GM12878 (cell line): ENCODE measurements at regions of chr15 and their contacts with region 1.

Region 1: GRCh38 chr15:42608110-42608531 is 32.7 kb downstream of the STARD9 start:
- DNase-seq: peak; percentile 71
- ATAC-seq: peak; percentile 82
- H3K4me3 ChIP-seq: no peak overlapping the region
- H3K27ac ChIP-seq: peak overlapping the region; percentile 50
- H3K4me1 ChIP-seq: peaks cover 45% of the 10 kb centered on the region
- H3K27me3 ChIP-seq: no peaks in the 10 kb centered on the region
- CTCF ChIP-seq: no peak
- EP300 ChIP-seq: peak in 1 of 2 experiments; percentile 52; a peak in 1 of 4 replicates
- POLR2A ChIP-seq: no peak
- RAD21 ChIP-seq: no peak

Region 2: DNA sequence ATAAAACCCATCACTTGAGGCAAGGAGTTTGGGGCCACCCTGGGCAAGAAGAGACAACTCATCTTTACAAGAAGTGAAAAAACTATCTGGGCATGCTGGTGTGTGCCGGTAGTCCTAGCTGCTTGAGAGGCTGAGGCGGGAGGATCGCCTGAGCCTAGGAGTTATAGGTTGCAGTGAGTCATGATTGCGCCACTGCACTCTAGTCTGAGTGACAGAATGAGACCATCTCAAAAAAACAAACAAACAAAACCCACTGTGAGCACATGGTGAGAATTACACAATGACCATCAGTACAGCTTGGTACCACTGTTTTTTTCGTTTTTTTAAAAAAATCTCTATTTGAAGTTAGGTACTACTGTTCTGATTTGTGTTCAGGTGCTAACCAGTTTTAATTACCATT is 413.6 kb before region 1 on chr15:
- CTCF ChIA-PET with region 1: no interaction called
- POLR2A ChIA-PET with region 1: no interaction called
- RAD21 ChIA-PET with region 1: no interaction called
- SMC1A ChIA-PET with region 1: no interaction called
- in situ Hi-C with region 1: no loop called
- intact Hi-C with region 1: no loop called
- DNase-seq: no peak
- ATAC-seq: no peak
- H3K4me3 ChIP-seq: no peak overlapping the region
- H3K27ac ChIP-seq: no peak overlapping the region
- H3K4me1 ChIP-seq: peaks cover 25% of the 10 kb centered on the region
- H3K27me3 ChIP-seq: no peaks in the 10 kb centered on the region
- CTCF ChIP-seq: no peak
- EP300 ChIP-seq: no peak
- POLR2A ChIP-seq: no peak
- RAD21 ChIP-seq: no peak

Region 3: GRCh38 chr15:42504631-42505030 is 103.5 kb before region 1 on chr15:
- CTCF ChIA-PET with region 1: interaction called, 3 read pairs
- POLR2A ChIA-PET with region 1: interaction called, 3 read pairs
- RAD21 ChIA-PET with region 1: interaction called, 7 read pairs
- SMC1A ChIA-PET with region 1: interaction called, 12 read pairs
- in situ Hi-C with region 1: no loop called
- intact Hi-C with region 1: no loop called
- DNase-seq: no peak
- ATAC-seq: peak; percentile 23
- H3K4me3 ChIP-seq: peak overlapping the region; percentile 44; the same call in 1 of the 2 replicates
- H3K27ac ChIP-seq: peak overlapping the region; percentile 81
- H3K4me1 ChIP-seq: peaks cover 50% of the 10 kb centered on the region
- H3K27me3 ChIP-seq: no peaks in the 10 kb centered on the region
- CTCF ChIP-seq: no peak
- EP300 ChIP-seq: no peak
- POLR2A ChIP-seq: no peak
- RAD21 ChIP-seq: no peak

Region 4: DNA sequence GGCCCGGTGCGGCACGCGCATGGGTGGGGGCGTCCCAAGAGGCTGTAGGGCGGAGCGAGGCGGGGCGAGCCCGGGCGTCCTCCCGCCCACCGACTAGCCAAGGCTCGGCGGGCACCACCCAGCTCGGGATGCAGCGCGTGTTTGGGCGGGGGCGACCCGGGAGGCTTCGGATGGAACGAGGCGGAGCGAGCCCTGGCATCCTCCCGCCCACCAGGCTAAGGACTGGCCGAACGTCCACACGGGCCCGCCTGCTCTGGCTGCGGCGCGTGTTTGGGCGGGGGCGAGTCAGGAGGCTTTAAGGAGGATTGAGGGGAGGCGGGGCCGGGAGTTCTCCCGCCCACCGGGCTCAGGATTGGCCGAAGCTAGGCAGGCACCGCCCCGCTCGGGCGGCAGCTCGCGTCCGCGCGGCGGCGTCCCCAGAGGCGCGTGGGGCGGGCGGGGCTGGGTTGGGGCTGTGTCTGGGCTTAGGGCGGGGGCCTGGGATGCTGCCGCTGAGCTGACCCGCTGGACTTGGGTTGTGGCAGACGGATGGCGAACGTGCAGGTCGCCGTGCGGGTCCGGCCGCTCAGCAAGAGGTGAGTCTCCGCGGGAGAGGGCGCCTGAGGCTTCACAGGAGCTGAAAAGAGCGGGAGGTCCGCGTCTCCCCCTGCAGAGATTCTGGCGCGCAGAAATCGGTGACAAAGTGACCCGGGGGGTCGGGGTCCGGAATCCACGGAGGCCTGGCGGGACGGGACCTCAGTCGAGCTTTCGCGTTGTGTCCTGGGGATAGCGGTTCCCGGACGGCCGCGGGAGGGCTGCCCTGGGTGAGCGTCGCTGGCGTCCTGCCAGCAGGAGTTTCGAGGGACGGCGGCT is 32.7 kb before region 1 on chr15 and contains the start of gene STARD9:
- CTCF ChIA-PET with region 1: interaction called, 6 read pairs
- POLR2A ChIA-PET with region 1: interaction called, 38 read pairs
- RAD21 ChIA-PET with region 1: interaction called, 30 read pairs
- SMC1A ChIA-PET with region 1: interaction called, 53 read pairs
- in situ Hi-C with region 1: no loop called
- intact Hi-C with region 1: no loop called
- DNase-seq: peak; percentile 87
- ATAC-seq: peak; percentile 94
- H3K4me3 ChIP-seq: peak within 1 kb of the TSS; percentile 89
- H3K27ac ChIP-seq: peak within 1 kb of the TSS; percentile 57; the same call in 1 of the 2 replicates
- H3K4me1 ChIP-seq: peaks cover 24% of the 10 kb centered on the region
- H3K27me3 ChIP-seq: no peaks in the 10 kb centered on the region
- CTCF ChIP-seq: no peak; a peak in 1 of 6 replicates
- EP300 ChIP-seq: no peak
- POLR2A ChIP-seq: peak; percentile 97
- RAD21 ChIP-seq: no peak
- polyA plus RNA-seq, gene STARD9: 0.58 to 1.1 TPM

Region 5: DNA sequence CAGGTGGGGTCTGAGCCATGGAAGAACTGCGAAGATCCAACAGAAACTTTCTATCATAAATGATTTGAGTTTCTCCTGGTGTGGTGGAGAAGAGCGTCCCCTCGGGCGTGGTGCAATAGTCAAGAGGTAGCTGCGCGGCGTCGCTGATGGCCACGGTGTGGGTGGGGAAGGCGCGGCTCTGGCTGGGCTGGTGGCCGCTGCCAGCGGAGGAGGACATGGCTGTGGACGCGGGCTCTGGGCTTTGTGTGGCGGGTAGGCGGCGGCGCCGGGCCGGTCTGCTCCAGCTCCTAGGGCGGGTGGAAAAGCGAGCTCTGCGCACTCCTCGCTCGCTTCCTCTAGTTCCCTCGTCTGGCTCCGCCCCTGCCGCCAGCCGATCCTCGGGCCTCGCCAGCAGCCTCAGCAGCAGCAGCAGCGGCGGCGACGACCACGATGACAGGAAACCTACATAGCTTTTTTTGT is 26.8 kb before region 1 on chr15:
- CTCF ChIA-PET with region 1: interaction called, 6 read pairs
- POLR2A ChIA-PET with region 1: interaction called, 38 read pairs
- RAD21 ChIA-PET with region 1: interaction called, 30 read pairs
- SMC1A ChIA-PET with region 1: interaction called, 53 read pairs
- in situ Hi-C with region 1: no loop called
- intact Hi-C with region 1: no loop called
- DNase-seq: no peak
- ATAC-seq: peak; percentile 96
- H3K4me3 ChIP-seq: peak overlapping the region; percentile 57
- H3K27ac ChIP-seq: no peak overlapping the region; the same call in 1 of the 2 replicates
- H3K4me1 ChIP-seq: peaks cover 15% of the 10 kb centered on the region
- H3K27me3 ChIP-seq: no peaks in the 10 kb centered on the region
- CTCF ChIP-seq: 0 out of 6 replicates have a peak, but pooled peaks of 1 of the 3 experiments have one; percentile 2
- EP300 ChIP-seq: no peak
- POLR2A ChIP-seq: peak; percentile 78
- RAD21 ChIP-seq: no peak